Ascending aorta (tissue), 2 donors: ENCODE measurements at regions of chr9 and their contacts with region 1.

Region 1: GRCh38 chr9:137188490-137189296 is at the starts of genes ANAPC2 and SSNA1:
- DNase-seq: peak; percentile 70 to 95
- H3K4me3 ChIP-seq: peak within 1 kb of the TSS; percentile 85 to 91
- H3K27ac ChIP-seq: peak within 1 kb of the TSS; percentile 86 to 89
- H3K4me1 ChIP-seq: peaks cover 23 to 38% of the 10 kb centered on the region in 2 donors
- H3K27me3 ChIP-seq: no peaks in the 10 kb centered on the region
- CTCF ChIP-seq: peak in 2 of 3 experiments; percentile 15 to 35
- total RNA-seq, gene ANAPC2: 24.1 TPM
- total RNA-seq, gene SSNA1: 123 TPM

Region 2: DNA sequence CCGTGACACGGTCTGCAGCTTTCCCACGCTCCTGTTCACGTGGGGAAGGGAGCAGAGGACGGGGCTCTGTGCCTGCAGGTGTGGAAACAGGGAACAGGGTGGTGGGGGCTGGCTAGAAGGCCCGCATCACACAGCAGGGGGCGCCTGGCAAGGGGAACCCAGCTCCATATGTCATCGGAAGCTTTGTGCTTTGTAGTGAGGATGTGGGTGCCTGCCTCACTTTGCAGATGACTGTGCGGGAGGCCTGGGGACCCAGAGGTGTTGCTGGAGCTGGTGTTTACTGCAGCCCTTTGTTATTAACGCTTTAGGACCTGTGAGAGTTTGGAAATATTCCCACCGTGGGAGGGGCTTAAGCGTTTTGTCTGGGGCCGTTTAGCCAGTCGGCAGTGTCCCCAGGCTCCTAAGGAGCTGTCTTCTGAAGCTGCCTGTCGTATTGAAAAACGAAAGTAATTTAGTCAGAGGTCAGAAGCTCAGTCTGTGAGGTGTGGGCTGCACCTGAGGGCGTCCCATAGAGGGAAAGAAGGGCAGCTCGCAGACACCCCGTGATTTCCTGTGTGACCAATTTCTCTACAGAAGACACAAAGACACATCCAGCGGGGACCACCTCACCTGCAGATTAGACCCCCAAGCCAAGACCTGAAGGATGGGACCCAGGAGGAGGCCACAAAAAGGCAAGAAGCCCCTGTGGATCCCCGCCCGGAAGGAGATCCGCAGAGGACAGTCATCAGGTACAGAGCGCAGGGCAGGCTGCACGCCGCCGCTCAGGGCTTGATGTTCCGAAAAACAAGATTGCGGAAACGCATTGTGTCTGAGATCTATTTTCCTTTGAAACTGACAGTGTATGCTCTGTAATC is 92.8 kb before region 1 on chr9:
- intact Hi-C with region 1: no loop called
- DNase-seq: no peak
- H3K4me3 ChIP-seq: no peak overlapping the region
- H3K27ac ChIP-seq: no peak overlapping the region
- H3K4me1 ChIP-seq: no peaks in the 10 kb centered on the region
- H3K27me3 ChIP-seq: no peaks in the 10 kb centered on the region
- CTCF ChIP-seq: no peak

Region 3: DNA sequence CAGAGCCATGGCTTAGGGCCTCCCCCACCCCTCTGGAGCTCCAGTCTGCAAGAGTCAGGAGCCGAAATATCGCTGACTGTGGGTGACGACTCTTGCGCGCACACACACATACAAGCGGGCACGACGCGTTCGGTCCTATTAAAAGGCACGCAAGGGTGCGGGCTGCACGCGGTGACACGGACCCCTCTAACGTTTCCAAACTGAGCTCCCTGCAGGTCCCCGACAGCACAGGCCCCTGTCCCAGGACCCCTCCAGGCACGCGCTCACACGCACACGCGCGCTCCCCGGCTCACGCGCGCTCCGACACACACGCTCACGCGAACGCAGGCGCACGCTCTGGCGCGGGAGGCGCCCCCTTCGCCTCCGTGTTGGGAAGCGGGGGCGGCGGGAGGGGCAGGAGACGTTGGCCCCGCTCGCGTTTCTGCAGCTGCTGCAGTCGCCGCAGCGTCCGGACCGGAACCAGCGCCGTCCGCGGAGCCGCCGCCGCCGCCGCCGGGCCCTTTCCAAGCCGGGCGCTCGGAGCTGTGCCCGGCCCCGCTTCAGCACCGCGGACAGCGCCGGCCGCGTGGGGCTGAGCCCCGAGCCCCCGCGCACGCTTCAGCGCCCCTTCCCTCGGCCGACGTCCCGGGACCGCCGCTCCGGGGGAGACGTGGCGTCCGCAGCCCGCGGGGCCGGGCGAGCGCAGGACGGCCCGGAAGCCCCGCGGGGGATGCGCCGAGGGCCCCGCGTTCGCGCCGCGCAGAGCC is 49.8 kb before region 1 on chr9 and contains the start of gene GRIN1:
- intact Hi-C with region 1: no loop called
- DNase-seq: no peak
- H3K4me3 ChIP-seq: peak within 1 kb of the TSS in 1 of 2 donors; percentile 32
- H3K27ac ChIP-seq: no peak within 1 kb of the TSS
- H3K4me1 ChIP-seq: no peaks in the 10 kb centered on the region
- H3K27me3 ChIP-seq: peaks cover 17% of the 10 kb centered on the region
- CTCF ChIP-seq: no peak
- total RNA-seq, gene GRIN1: not detected

Region 4: GRCh38 chr9:137240861-137241489 is 52.3 kb after region 1 on chr9 and contains the start of gene TUBB4B:
- intact Hi-C with region 1: loop called (anchors 1 kb)
- DNase-seq: peak; percentile 99 to 100
- H3K4me3 ChIP-seq: peak within 1 kb of the TSS; percentile 81 to 93
- H3K27ac ChIP-seq: peak within 1 kb of the TSS; percentile 88 to 90
- H3K4me1 ChIP-seq: peaks cover 13 to 28% of the 10 kb centered on the region in 2 donors
- H3K27me3 ChIP-seq: no peaks in the 10 kb centered on the region
- CTCF ChIP-seq: peak in 1 of 3 experiments; percentile 33
- total RNA-seq, gene TUBB4B: 403 TPM

Region 5: GRCh38 chr9:137502008-137502913 is 313.6 kb after region 1 on chr9:
- intact Hi-C with region 1: no loop called
- DNase-seq: no peak
- H3K4me3 ChIP-seq: no peak overlapping the region
- H3K27ac ChIP-seq: no peak overlapping the region
- H3K4me1 ChIP-seq: no peaks in the 10 kb centered on the region
- H3K27me3 ChIP-seq: no peaks in the 10 kb centered on the region
- CTCF ChIP-seq: no peak

Region 6: DNA sequence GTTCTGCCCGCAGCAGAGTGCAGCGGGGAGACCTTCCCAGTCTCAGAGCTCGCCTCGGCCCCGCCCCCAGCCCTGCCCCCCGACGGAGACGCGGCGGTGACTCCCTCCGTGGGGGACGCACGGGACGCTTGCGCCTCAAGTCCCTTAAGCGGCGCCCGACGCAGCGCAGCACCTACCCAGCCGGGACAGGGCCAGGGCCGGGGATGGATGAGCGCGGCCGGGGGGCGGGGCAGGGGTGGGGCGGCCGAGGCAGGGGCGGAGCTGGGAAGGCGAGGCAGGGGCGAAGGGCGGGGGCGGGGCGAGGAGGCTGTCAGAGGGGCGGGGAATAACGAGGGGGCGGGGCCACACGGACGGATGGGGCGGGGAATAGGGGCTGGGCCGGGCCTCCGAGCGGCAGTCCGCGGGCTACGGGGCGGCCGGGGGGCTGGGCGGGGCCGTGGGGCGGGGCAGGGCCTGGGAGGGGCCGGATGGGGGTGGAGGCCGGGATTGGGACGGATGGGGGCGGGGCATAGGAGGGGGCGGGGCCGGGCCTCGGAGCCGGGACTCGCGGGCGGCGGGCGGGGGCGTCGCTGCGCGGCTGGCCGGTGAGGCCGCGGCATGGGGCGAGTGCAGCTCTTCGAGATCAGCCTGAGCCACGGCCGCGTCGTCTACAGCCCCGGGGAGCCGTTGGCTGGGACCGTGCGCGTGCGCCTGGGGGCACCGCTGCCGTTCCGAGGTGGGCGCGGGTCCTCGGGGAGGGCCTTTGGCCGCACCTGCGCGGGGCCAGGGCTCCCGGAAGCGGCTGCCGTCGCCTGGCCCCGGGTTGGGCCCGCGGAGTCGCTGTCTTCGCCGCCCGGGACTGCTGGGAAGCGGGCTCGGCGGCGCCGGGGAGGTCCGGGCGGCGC is 416.7 kb after region 1 on chr9 and contains the start of gene ARRDC1:
- intact Hi-C with region 1: no loop called
- DNase-seq: peak; percentile 75 to 97
- H3K4me3 ChIP-seq: peak within 1 kb of the TSS; percentile 94 to 96
- H3K27ac ChIP-seq: peak within 1 kb of the TSS; percentile 71 to 79
- H3K4me1 ChIP-seq: peaks cover 6 to 19% of the 10 kb centered on the region in 2 donors
- H3K27me3 ChIP-seq: no peaks in the 10 kb centered on the region
- CTCF ChIP-seq: peak in 1 of 3 experiments; percentile 11
- total RNA-seq, gene ARRDC1: 56.8 TPM